Thyroid gland (tissue), 4 donors: ENCODE measurements at regions of chr17 and their contacts with region 1.

Region 1: GRCh38 chr17:42116705-42117396 is 4.3 kb downstream of the KAT2A start:
- DNase-seq: peak; percentile 86 to 89
- H3K4me3 ChIP-seq: no peak overlapping the region
- H3K27ac ChIP-seq: no peak overlapping the region
- H3K4me1 ChIP-seq: peaks cover 17 to 27% of the 10 kb centered on the region in 2 donors
- H3K27me3 ChIP-seq: no peaks in the 10 kb centered on the region
- CTCF ChIP-seq: peak; percentile 59 to 89 (median 78)
- POLR2A ChIP-seq: no peak

Region 2: DNA sequence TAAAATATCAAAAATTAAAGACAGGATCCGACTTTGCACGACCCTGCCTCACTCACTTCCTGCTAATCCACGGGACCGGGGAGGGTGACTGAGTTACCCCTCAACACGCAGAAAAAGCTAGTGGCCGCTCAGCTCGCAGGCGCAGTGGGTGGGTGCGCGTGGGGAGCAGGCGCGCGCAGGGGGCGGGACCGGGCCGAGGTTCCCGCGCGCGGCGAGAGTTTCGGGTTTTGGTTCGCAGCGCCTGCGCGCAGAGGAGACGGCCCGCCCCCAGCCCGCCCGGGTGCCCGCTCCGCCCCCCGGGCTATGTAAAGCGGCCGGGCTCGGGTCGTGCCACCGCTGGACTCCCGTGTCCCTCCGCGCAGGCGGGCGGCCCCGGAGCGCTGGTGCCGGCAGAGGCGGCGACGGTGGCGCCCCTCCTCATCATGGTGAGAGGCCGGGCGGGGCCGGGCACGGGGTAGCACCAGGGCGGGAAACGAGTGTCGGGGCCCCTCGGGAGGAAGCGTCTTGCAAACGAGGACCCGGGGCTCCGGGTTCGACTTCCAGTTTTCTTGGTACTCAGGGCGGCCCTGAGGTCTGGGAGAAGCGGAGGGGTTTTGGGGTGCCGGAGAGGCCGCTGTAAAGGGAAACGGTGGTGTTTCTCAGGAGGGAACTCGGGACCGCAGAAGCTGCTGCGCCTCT is 150.2 kb before region 1 on chr17 and contains the start of gene CNP:
- intact Hi-C with region 1: loop called (anchors 5 kb)
- DNase-seq: peak; percentile 94
- H3K4me3 ChIP-seq: peak within 1 kb of the TSS; percentile 46 to 90 (median 90)
- H3K27ac ChIP-seq: peak within 1 kb of the TSS; percentile 85 to 91 (median 87)
- H3K4me1 ChIP-seq: peaks cover 12 to 40% of the 10 kb centered on the region in 2 donors
- H3K27me3 ChIP-seq: no peaks in the 10 kb centered on the region
- CTCF ChIP-seq: peak in 1 of 6 experiments; percentile 28
- POLR2A ChIP-seq: peak in 1 of 2 donors; percentile 94
- total RNA-seq, gene CNP: 41.8 to 65.2 (median 53.8) TPM

Region 3: GRCh38 chr17:42019509-42020404 is 97.1 kb before region 1 on chr17 and contains the start of gene NKIRAS2:
- intact Hi-C with region 1: loop called (anchors 5 kb)
- DNase-seq: peak; percentile 94
- H3K4me3 ChIP-seq: peak within 1 kb of the TSS; percentile 56 to 94 (median 71)
- H3K27ac ChIP-seq: peak within 1 kb of the TSS; percentile 61 to 85 (median 62)
- H3K4me1 ChIP-seq: peaks cover 36 to 43% of the 10 kb centered on the region in 2 donors
- H3K27me3 ChIP-seq: no peaks in the 10 kb centered on the region
- CTCF ChIP-seq: peak; percentile 72 to 97 (median 90)
- POLR2A ChIP-seq: peak in 1 of 2 donors; percentile 61
- total RNA-seq, gene NKIRAS2: 23.6 to 34.6 (median 26.6) TPM

Region 4: DNA sequence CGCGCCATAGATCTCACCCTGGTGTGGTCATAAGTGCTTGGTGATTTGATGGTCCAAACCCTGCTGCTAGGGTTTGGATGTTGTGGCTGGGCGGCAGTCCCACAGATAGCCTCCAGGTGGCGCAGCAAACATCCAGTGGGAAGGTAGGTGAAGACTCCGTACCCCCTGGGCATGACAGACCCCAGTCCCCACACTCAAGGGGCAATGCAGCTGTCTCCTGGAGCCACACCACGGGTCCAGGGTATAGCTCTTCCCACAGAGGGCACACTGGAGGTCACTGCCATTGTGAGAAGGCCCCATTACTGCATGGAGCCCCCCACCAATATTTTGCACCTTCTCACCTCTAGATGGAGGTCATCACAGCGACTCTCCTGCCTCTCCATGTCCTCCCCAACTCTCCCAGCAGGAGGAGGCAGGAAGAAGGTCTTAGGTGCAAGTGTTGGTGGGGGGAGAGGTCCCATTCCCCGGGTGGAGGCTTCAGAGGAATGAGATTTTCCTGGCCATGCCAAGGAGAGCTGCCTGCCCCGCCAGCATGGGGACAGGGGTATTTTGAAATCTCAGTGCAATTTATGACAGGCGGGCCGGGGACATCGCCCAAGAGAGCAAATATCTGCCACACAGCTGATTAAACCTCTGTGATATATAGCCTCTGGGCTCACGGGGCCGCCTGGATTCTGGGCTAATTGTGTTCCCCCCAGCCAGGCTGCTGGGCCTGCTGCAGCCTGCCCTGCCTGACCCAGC is 49.3 kb before region 1 on chr17:
- intact Hi-C with region 1: loop called (anchors 5 kb)
- DNase-seq: peak; percentile 54 to 58
- H3K4me3 ChIP-seq: no peak overlapping the region
- H3K27ac ChIP-seq: no peak overlapping the region
- H3K4me1 ChIP-seq: peaks cover 0 to 8% of the 10 kb centered on the region in 2 donors
- H3K27me3 ChIP-seq: peaks cover 4% of the 10 kb centered on the region
- CTCF ChIP-seq: peak; percentile 74 to 89 (median 79)
- POLR2A ChIP-seq: no peak

Region 5: DNA sequence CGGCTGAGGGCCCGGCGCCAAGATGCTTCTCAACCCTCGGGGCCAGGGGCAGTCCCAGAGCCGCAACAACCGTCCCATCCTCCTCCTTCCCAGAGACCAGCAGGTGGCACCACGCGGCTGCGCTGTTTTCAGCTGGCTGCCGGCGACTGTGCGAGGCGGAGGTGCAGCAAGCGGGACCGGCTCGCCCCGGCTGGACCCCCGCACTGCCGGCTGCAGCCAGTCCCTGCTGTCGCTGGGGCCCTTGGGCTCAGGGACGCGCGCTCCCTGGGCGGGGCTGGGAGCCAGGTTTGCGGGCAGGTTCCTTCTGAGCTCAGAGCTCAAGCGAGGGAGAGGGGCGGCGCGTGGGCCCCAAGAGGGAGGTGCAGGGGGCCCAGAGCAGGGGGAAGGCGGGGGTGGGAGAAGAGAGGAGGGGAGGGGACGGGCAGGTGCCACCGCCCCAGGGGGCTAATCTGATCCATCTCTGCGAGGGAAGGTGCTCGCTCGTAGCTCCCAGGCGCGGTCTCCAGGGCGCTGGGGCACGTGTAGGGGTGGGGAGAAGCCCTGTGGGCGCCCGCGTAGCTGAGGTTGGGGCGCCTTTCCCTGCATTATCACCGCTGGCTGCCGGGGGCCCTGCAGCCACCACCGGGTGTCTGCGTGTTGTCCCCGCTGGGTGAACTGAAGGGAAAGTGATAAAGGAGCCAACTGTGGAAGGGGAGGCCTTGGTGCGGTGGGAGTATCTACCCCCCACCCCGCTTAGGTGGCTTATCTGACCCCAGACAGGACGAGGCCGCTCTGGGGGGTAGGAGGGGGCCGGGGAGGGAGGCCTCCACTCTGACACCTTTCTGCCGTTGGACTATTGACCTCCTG is 195.7 kb after region 1 on chr17:
- intact Hi-C with region 1: no loop called
- DNase-seq: peak; percentile 95 to 97
- H3K4me3 ChIP-seq: no peak overlapping the region
- H3K27ac ChIP-seq: peak overlapping the region; percentile 85 to 96 (median 91)
- H3K4me1 ChIP-seq: peaks cover 19 to 26% of the 10 kb centered on the region in 2 donors
- H3K27me3 ChIP-seq: no peaks in the 10 kb centered on the region
- CTCF ChIP-seq: peak in 5 of 6 experiments; percentile 52 to 73 (median 61)
- POLR2A ChIP-seq: peak in 1 of 2 donors; percentile 30

Region 6: GRCh38 chr17:42475835-42476234 is 359.0 kb after region 1 on chr17:
- intact Hi-C with region 1: no loop called
- DNase-seq: no peak
- H3K4me3 ChIP-seq: no peak overlapping the region
- H3K27ac ChIP-seq: no peak overlapping the region
- H3K4me1 ChIP-seq: no peaks in the 10 kb centered on the region
- H3K27me3 ChIP-seq: no peaks in the 10 kb centered on the region
- CTCF ChIP-seq: no peak
- POLR2A ChIP-seq: no peak